Posterior vena cava (tissue), 2 donors: ENCODE measurements at regions of chr22 and their contacts with region 1.

Region 1: GRCh38 chr22:29539105-29539504 is 14.5 kb downstream of the THOC5 start:
- DNase-seq: no peak

Region 2: GRCh38 chr22:27713461-27713860 is 1825.6 kb before region 1 on chr22:
- intact Hi-C with region 1: loop called in 1 of 2 experiments (anchors 5 kb)
- DNase-seq: peak; percentile 5

Region 3: GRCh38 chr22:29563652-29564460 is 24.8 kb after region 1 on chr22:
- intact Hi-C with region 1: loop called in 1 of 2 experiments (anchors 1 kb)
- DNase-seq: no peak

Region 4: DNA sequence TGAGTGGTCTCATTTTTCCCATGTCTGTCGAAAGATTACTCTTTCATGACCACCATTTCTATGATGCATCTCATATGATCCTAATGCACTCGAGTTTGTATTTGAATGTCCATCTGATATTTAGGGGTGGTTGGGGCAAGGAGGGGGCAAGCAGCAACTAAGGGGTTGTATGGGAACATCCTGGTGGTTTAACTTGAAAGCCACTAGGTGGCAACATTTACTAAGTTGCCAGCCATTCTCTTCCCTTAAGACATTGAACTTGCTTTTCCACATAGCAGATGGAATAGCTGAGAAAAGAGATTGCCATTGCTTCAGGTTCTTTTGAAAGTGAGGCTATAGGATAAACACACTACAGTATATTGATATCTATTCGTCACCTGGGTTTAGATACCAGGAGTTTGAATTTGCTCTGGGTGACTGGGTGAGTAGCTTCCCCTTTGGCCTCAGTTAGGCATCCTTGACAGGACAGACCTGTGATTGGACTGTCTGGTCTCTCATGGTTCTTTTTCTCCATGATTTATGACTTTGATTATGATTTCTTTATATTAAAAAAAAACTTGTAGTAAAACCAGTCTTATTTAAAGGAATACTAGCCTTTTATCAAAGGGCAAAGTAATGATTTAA is 96.7 kb after region 1 on chr22:
- intact Hi-C with region 1: no loop called
- DNase-seq: no peak